ENCODE measurements at regions of chr2 and their contacts with region 1.

Region 1: DNA sequence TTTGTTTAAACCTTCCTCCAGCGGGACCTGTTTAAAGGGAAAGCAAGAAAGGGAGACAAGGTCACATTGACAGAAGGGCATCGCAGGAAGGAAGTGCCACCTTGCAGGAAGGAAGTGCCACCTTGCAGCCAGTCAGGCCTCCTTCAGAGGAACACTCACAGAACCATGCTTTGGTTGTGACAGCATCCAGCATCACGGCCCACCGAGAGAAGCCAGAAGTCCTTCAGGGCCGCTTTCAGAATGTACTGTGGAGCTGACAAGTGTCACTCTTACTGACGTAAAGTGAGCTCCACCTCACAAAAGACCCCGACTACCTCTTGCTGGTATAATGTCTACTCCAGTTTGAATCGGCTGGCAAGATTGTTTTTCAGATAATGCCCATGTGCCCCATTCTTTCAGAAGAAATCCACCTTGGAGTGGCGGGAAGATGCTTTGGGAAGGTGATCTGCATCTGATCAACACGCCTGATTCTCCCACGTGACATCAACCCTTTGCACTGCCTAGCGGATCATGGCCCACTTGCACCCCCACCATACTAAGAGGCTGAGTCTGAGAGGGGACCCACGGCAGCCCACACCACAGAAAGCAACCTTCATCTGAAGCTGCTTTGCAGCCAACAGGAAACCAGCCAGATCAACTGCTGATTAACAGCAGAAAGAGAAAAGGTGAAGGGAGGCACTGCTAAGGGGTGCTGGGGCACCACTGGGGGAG is 99.8 kb downstream of the UXS1 start:
- DNase-seq: no peak
- ATAC-seq: no peak
- H3K4me3 ChIP-seq: no peak overlapping the region
- H3K27ac ChIP-seq: no peak overlapping the region
- H3K4me1 ChIP-seq: no peaks in the 10 kb centered on the region
- H3K27me3 ChIP-seq: no peaks in the 10 kb centered on the region

Region 2: GRCh38 chr2:105919826-105920225 is 174.5 kb before region 1 on chr2:
- intact Hi-C with region 1: loop called in 1 of 2 experiments (anchors 5 kb)
- DNase-seq: peak in 1 of 2 donors; percentile 9
- ATAC-seq: no peak
- H3K4me3 ChIP-seq: no peak overlapping the region
- H3K27ac ChIP-seq: no peak overlapping the region
- H3K4me1 ChIP-seq: no peaks in the 10 kb centered on the region
- H3K27me3 ChIP-seq: no peaks in the 10 kb centered on the region

Measured in aorta (tissue), 5 donors.